ENCODE measurements at regions of chr10 and their contacts with region 1.

Region 1: GRCh38 chr10:80498833-80499741 is 38.6 kb upstream of the SH2D4B start:
- DNase-seq: peak; percentile 97
- ATAC-seq: peak; percentile 93

Region 2: GRCh38 chr10:80453701-80454513 is 45.2 kb before region 1 on chr10 and contains the start of gene TSPAN14:
- intact Hi-C with region 1: loop called (anchors 2 kb)
- DNase-seq: peak; percentile 95
- ATAC-seq: peak; percentile 94
- total RNA-seq, gene TSPAN14: 38.7 TPM

Region 3: GRCh38 chr10:80473692-80474593 is 25.1 kb before region 1 on chr10:
- intact Hi-C with region 1: loop called (anchors 2 kb)
- DNase-seq: no peak
- ATAC-seq: no peak

Measured in Right ventricle myocardium inferior (tissue), 1 donor.